Activated CD8-positive, alpha-beta T cell treated with anti-CD3 and anti-CD28 coated beads, Interleukin-2, amount 10 ng/mL, durations not matched to agents 7 days and 5 days (primary cell): ENCODE measurements at regions of chr15 and their contacts with region 1.

Region 1: DNA sequence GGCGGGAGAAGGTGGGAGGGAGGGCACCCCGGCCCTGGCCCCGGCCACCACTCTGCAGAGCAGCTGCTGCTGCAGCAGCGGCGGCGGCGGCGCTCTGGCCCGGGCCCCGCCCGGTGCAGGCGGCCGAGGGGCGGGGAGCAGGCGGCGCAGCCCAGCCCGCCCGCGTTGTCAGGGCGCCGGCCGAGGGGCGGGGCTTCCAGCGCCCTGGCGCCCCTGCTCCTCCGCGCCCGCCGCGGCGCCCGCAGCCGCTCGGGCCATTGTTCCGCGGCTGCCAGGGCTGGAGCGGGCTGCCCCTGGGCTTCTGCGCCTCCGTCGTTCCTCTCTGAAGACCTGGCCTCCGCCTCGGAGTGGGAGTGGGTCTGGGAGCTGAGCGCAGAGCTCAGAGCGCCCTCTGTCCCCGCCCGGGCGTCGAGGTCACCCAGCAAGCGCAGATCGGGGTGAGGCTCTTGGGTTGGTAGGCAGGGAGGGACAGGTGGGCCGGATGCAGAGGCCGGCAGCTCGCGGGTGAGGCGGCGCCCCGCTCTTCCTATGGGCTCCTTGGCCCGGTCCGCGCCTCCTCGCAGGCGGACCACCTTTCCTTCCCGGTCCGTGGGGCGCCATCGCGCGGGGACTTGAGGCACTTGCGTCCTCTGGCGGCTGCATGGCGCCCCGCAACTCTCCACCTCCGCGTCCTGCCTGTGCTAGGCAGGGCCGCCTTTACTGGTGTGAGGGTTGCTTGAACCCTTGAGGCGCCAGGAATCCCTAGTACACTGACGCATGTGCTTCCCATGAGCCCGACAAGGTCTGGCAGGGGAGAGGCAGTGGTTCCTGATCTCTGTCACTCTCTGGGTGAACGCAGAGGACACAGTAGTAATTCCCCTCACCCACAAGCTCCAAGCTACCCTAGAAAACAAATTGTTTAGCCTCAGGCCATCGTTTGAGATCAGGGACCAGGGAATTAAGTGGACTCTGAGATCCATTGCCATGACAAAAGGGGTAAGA is at the start of gene LPCAT4:
- DNase-seq: peak; percentile 95
- ATAC-seq: peak; percentile 90
- H3K4me3 Mint-ChIP-seq: peak within 1 kb of the TSS; percentile 95
- H3K27ac Mint-ChIP-seq: peak within 1 kb of the TSS; percentile 98
- H3K4me1 Mint-ChIP-seq: peaks cover 38% of the 10 kb centered on the region
- H3K27me3 Mint-ChIP-seq: no peaks in the 10 kb centered on the region
- total RNA-seq, gene LPCAT4: 106 to 115 TPM

Region 2: GRCh38 chr15:34054081-34054707 is 313.2 kb before region 1 on chr15:
- CTCF ChIA-PET with region 1: no interaction called
- POLR2A ChIA-PET with region 1: no interaction called
- DNase-seq: no peak
- ATAC-seq: no peak
- H3K4me3 Mint-ChIP-seq: no peak overlapping the region
- H3K27ac Mint-ChIP-seq: no peak overlapping the region
- H3K4me1 Mint-ChIP-seq: no peaks in the 10 kb centered on the region
- H3K27me3 Mint-ChIP-seq: peaks cover 11% of the 10 kb centered on the region

Region 3: GRCh38 chr15:34209421-34210282 is 157.7 kb before region 1 on chr15 and contains the start of gene KATNBL1:
- CTCF ChIA-PET with region 1: interaction called, 21 read pairs
- POLR2A ChIA-PET with region 1: no interaction called
- DNase-seq: peak; percentile 98
- ATAC-seq: peak; percentile 96
- H3K4me3 Mint-ChIP-seq: peak within 1 kb of the TSS; percentile 93
- H3K27ac Mint-ChIP-seq: peak within 1 kb of the TSS; percentile 90
- H3K4me1 Mint-ChIP-seq: peaks cover 17% of the 10 kb centered on the region
- H3K27me3 Mint-ChIP-seq: peaks cover 3% of the 10 kb centered on the region
- total RNA-seq, gene KATNBL1: 40.5 to 44.5 TPM

Region 4: GRCh38 chr15:34248190-34248589 is 119.2 kb before region 1 on chr15:
- CTCF ChIA-PET with region 1: interaction called, 93 read pairs
- POLR2A ChIA-PET with region 1: interaction called, 4 read pairs
- DNase-seq: no peak
- ATAC-seq: no peak
- H3K4me3 Mint-ChIP-seq: no peak overlapping the region
- H3K27ac Mint-ChIP-seq: no peak overlapping the region
- H3K4me1 Mint-ChIP-seq: no peaks in the 10 kb centered on the region
- H3K27me3 Mint-ChIP-seq: no peaks in the 10 kb centered on the region

Region 5: DNA sequence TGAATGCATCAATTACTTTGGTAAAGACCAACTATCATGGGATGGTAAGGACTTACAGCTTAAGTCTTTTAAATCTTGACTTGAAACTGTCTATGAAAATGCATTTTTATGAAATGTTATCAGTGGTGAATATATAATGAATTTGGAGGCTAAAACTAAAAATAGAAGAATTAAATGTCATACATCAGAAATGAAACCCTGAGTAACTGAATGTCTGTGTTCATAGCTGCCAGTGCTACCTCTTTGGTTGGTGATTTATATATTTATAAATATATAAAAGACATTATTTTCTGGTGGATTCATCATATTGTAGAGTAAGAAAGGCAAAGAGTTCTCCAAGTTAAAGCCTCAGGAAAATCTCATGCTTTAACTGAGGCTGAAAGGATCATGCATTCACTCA is 42.0 kb before region 1 on chr15:
- CTCF ChIA-PET with region 1: interaction called, 35 read pairs
- POLR2A ChIA-PET with region 1: interaction called, 9 read pairs
- DNase-seq: no peak
- ATAC-seq: no peak
- H3K4me3 Mint-ChIP-seq: no peak overlapping the region
- H3K27ac Mint-ChIP-seq: peak overlapping the region; percentile 30
- H3K4me1 Mint-ChIP-seq: peaks cover 45% of the 10 kb centered on the region
- H3K27me3 Mint-ChIP-seq: no peaks in the 10 kb centered on the region

Region 6: GRCh38 chr15:34337557-34338306 is 29.7 kb before region 1 on chr15 and contains the start of gene SLC12A6:
- CTCF ChIA-PET with region 1: interaction called, 51 read pairs
- POLR2A ChIA-PET with region 1: interaction called, 33 read pairs
- DNase-seq: peak; percentile 93
- ATAC-seq: peak; percentile 83
- H3K4me3 Mint-ChIP-seq: peak within 1 kb of the TSS; percentile 97
- H3K27ac Mint-ChIP-seq: peak within 1 kb of the TSS; percentile 97
- H3K4me1 Mint-ChIP-seq: peaks cover 58% of the 10 kb centered on the region
- H3K27me3 Mint-ChIP-seq: no peaks in the 10 kb centered on the region
- total RNA-seq, gene SLC12A6: 24.8 to 25.3 TPM

Region 7: GRCh38 chr15:34437687-34438086 is 70.3 kb after region 1 on chr15 and contains the start of gene GOLGA8A:
- CTCF ChIA-PET with region 1: interaction called, 10 read pairs
- POLR2A ChIA-PET with region 1: no interaction called
- DNase-seq: peak; percentile 85
- ATAC-seq: peak; percentile 79
- H3K4me3 Mint-ChIP-seq: peak within 1 kb of the TSS; percentile 89
- H3K27ac Mint-ChIP-seq: peak within 1 kb of the TSS; percentile 93
- H3K4me1 Mint-ChIP-seq: peaks cover 26% of the 10 kb centered on the region
- H3K27me3 Mint-ChIP-seq: peaks cover 14% of the 10 kb centered on the region
- total RNA-seq, gene GOLGA8A: 207 to 215 TPM